GM10248 (cell line): ENCODE measurements at regions of chr4 and their contacts with region 1.

Region 1: GRCh38 chr4:146202665-146203064 is 11.7 kb upstream of the REELD1 start:
- DNase-seq: no peak
- CTCF ChIP-seq: no peak

Region 2: GRCh38 chr4:146124023-146124662 is 78.5 kb before region 1 on chr4:
- CTCF ChIA-PET with region 1: no interaction called
- POLR2A ChIA-PET with region 1: no interaction called
- DNase-seq: peak; percentile 42
- CTCF ChIP-seq: peak; percentile 15

Region 3: GRCh38 chr4:146159384-146160058 is 43.1 kb before region 1 on chr4:
- CTCF ChIA-PET with region 1: no interaction called
- POLR2A ChIA-PET with region 1: no interaction called
- DNase-seq: no peak
- CTCF ChIP-seq: no peak

Region 4: DNA sequence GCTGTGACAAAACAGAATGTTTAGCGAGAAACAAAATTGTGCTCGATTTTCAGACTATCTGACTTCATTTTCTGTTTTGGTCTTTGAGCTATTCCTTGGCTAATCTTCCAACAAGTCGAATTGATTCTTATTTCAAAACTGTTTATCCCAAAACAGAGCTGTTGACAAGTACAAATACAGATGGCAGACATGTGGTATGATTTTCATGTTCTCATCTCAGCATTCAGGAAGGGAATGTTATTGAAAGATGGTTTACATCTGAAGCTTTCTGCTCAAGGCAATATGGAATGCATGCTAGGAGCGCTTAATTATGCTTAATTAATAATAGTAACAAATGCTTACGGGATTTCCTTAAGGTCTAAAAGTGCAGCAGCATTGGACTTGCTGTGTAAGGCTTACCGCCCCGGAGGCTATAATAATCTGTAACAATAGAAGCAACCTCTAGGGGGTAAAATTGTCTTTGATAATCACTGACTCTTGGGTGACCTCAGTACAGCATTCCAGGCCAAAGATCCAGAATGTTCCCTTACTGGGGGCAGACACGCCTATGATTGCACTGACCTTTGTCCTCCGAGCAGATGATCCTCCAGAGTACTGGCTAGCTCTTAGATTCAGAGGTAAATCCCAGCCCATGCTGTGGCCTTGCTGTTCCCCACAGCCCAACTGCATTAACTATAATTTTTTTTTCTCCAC is 10.8 kb before region 1 on chr4:
- CTCF ChIA-PET with region 1: interaction called, 16 read pairs
- POLR2A ChIA-PET with region 1: no interaction called
- DNase-seq: no peak
- CTCF ChIP-seq: no peak

Region 5: DNA sequence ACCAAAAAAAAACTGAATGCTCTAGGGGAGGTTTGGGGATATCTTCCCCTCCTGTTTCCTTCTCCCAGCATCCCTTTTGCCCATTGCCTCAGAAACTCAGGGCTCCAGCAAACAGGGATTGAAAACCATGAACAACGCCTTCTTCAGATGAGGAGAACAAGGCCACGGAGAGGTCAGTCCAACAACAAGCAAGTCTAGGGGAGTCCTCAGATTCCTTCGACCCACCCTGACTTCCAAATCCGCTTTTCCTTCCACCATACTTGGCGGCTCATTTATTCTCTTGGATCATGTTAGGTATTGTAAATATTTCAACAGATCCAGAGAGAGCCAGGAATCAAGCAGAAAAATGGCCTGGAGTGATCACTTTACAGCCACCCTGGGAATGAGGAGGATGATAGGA is 33.6 kb after region 1 on chr4:
- CTCF ChIA-PET with region 1: no interaction called
- POLR2A ChIA-PET with region 1: no interaction called
- DNase-seq: no peak
- CTCF ChIP-seq: no peak